ENCODE measurements at regions of chr17 and their contacts with region 1.

Region 1: GRCh38 chr17:40219073-40219860 is at the start of gene WIPF2:
- DNase-seq: peak; percentile 69
- ATAC-seq: peak; percentile 99
- H3K4me3 ChIP-seq: peak within 1 kb of the TSS; percentile 68 to 70
- H3K27ac ChIP-seq: peak within 1 kb of the TSS; percentile 88
- H3K4me1 ChIP-seq: no peaks in the 10 kb centered on the region
- H3K27me3 ChIP-seq: no peaks in the 10 kb centered on the region
- CTCF ChIP-seq: no peak
- total RNA-seq, gene WIPF2: 45.9 TPM

Region 2: GRCh38 chr17:40230670-40231069 is 11.4 kb after region 1 on chr17:
- CTCF ChIA-PET with region 1: interaction called, 5 read pairs
- POLR2A ChIA-PET with region 1: interaction called, 16 read pairs
- in situ Hi-C with region 1: no loop called
- intact Hi-C with region 1: no loop called
- DNase-seq: no peak
- ATAC-seq: no peak
- H3K4me3 ChIP-seq: no peak overlapping the region
- H3K27ac ChIP-seq: no peak overlapping the region
- H3K4me1 ChIP-seq: no peaks in the 10 kb centered on the region
- H3K27me3 ChIP-seq: no peaks in the 10 kb centered on the region
- CTCF ChIP-seq: no peak

Region 3: GRCh38 chr17:40281663-40282062 is 62.4 kb after region 1 on chr17:
- CTCF ChIA-PET with region 1: no interaction called
- POLR2A ChIA-PET with region 1: interaction called, 18 read pairs
- in situ Hi-C with region 1: no loop called
- intact Hi-C with region 1: no loop called
- DNase-seq: no peak
- ATAC-seq: no peak
- H3K4me3 ChIP-seq: no peak overlapping the region
- H3K27ac ChIP-seq: no peak overlapping the region
- H3K4me1 ChIP-seq: no peaks in the 10 kb centered on the region
- H3K27me3 ChIP-seq: no peaks in the 10 kb centered on the region
- CTCF ChIP-seq: no peak

Region 4: GRCh38 chr17:40402668-40403067 is 183.4 kb after region 1 on chr17:
- CTCF ChIA-PET with region 1: no interaction called
- POLR2A ChIA-PET with region 1: interaction called, 12 read pairs
- in situ Hi-C with region 1: no loop called
- intact Hi-C with region 1: no loop called
- DNase-seq: no peak
- ATAC-seq: no peak
- H3K4me3 ChIP-seq: no peak overlapping the region
- H3K27ac ChIP-seq: no peak overlapping the region
- H3K4me1 ChIP-seq: no peaks in the 10 kb centered on the region
- H3K27me3 ChIP-seq: no peaks in the 10 kb centered on the region
- CTCF ChIP-seq: no peak

Measured in Panc1 (cell line).